ENCODE measurements at regions of chr18 and their contacts with region 1.

Region 1: DNA sequence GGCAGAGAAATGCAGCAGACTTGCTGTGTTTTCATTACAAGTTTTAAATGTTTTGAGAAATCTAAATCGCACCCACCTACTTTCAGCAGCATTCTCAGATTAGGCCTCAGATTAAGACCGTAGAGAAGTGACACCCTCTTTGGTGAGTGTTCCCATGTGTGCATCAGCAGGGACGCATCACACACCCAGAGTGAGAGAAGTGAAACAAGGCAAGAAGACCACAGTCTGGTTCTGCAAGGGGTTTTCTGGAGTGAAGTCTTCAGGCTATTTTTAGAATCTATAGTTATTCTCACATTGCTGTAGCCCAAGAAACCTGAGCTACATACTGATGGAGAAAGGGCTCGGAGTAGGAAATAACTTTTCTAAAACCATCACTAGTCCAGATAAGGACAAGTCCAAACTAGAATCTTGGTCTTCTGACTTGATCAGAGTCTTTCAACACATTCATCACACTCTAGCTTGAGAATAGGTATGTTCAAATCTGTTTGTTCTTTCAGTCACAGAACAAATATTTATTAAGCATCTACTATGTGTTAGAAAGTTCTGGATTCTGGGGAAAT is 1216.6 kb upstream of the PIK3C3 start:
- DNase-seq: no peak

Region 2: GRCh38 chr18:39994498-39994897 is 743.9 kb before region 1 on chr18:
- intact Hi-C with region 1: loop called in 1 of 2 experiments (anchors 5 kb)
- DNase-seq: no peak

Measured in posterior vena cava (tissue), 2 donors.